AG04450 (cell line): ENCODE measurements at regions of chr6 and their contacts with region 1.

Region 1: DNA sequence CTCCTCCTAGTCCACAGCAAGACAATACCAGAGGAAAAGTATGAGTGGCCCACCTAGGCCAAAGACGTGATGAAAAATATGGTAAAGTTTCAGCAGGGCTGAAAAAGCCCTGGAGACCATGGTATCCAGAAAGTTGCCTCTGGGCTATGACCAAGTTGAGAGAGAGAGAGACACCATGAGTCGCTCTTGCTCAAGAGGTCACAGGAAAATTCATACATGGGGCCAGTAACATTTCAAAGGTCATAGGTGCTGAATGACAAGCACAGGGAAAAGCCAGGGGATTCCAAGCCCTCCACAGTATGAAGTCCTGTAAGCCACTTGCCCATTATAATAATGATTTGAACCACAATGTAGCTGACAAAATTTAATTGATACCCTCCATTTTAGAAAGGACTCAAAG is 657.7 kb upstream of the CITED2 start:
- DNase-seq: no peak
- H3K4me3 ChIP-seq: no peak overlapping the region
- H3K27ac ChIP-seq: no peak overlapping the region
- H3K27me3 ChIP-seq: no peaks in the 10 kb centered on the region
- CTCF ChIP-seq: no peak

Region 2: GRCh38 chr6:140062043-140063020 is 30.2 kb after region 1 on chr6:
- CTCF ChIA-PET with region 1: no interaction called
- POLR2A ChIA-PET with region 1: no interaction called
- DNase-seq: peak; percentile 88
- H3K4me3 ChIP-seq: no peak overlapping the region
- H3K27ac ChIP-seq: peak overlapping the region; percentile 84
- H3K27me3 ChIP-seq: no peaks in the 10 kb centered on the region
- CTCF ChIP-seq: no peak

Region 3: GRCh38 chr6:140193269-140193668 is 161.1 kb after region 1 on chr6:
- CTCF ChIA-PET with region 1: interaction called, 10 read pairs
- POLR2A ChIA-PET with region 1: no interaction called
- DNase-seq: no peak
- H3K4me3 ChIP-seq: no peak overlapping the region
- H3K27ac ChIP-seq: no peak overlapping the region
- H3K27me3 ChIP-seq: no peaks in the 10 kb centered on the region
- CTCF ChIP-seq: no peak